Sigmoid colon (tissue), 7 donors: ENCODE measurements at regions of chr17 and their contacts with region 1.

Region 1: DNA sequence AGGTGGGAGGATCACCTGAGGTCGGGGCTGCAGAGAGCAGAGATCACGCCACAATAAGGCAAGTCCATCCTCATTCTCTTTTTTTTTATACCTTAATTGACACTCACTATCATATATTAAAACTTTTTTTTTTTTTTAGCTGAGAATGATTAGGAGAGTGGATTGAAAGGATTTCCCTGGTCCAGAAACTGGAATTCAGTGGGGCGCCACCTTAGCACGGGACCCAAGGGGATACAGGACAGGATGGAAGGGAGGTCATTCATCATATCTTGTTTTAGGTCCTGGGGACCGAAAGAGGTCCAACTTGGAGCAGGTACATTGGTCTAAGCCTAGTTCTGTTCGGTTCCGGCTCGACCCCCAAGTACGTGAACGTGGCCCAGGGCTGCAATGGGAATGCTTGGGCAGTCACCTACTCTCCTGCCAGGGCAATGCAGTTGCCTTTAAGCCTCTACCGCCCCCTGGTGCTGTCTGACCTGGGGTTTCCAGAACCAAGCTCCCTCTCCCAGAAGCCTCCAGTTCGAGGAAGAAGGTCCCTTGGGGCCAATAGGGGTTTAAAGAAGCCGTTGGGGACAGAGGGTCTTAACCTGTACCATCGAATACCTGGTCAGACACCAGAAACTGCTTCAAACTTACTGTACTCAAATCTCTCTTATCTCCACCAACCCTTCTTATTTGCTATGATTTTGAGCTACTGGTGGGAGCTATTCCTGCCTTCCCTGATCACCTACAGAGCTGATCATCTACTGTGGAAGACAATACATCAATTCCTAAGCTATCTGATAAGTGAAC is 19.9 kb upstream of the GPATCH8 start:
- DNase-seq: peak; percentile 65
- H3K4me3 ChIP-seq: no peak overlapping the region
- H3K27ac ChIP-seq: no peak overlapping the region
- H3K4me1 ChIP-seq: no peaks in the 10 kb centered on the region
- H3K27me3 ChIP-seq: no peaks in the 10 kb centered on the region
- CTCF ChIP-seq: peak in 3 of 4 experiments; percentile 22 to 52 (median 51)
- EP300 ChIP-seq: no peak
- POLR2A ChIP-seq: no peak

Region 2: DNA sequence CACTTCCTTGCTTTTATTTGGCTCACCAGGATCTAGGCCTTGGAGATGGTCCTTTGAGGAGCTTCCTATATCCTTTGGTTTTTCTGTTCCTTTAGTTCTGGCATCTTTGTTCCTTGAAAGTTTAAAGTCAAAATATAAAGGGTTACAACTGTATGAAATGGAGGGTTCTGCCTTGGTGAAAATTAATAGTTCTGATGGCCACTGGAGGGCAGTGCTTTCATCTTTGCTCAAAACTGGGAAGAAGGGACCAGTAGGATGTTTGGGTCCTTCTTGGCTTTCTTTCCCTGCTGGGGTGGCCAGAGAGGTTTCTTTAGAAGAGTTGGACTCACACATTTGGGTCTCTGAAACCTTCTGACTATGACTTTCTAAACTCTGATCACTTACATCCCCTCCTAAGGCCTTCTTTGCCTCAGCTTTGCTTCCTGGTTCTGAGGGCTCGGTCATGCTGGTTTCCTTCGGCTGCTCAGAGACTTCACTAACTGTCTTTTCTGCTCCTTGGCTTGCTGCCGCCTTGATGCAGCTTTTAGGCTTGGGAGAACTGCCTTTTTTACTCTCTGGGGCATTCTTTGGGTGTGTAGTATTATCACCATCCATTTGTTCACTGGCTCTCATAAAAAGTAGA is 122.7 kb before region 1 on chr17:
- intact Hi-C with region 1: loop called (anchors 5 kb)
- DNase-seq: no peak
- H3K4me3 ChIP-seq: no peak overlapping the region
- H3K27ac ChIP-seq: no peak overlapping the region
- H3K4me1 ChIP-seq: no peaks in the 10 kb centered on the region
- H3K27me3 ChIP-seq: no peaks in the 10 kb centered on the region
- CTCF ChIP-seq: peak in 2 of 4 experiments; percentile 10 to 28
- EP300 ChIP-seq: no peak
- POLR2A ChIP-seq: no peak